ENCODE measurements at regions of chr1 and their contacts with region 1.

Region 1: DNA sequence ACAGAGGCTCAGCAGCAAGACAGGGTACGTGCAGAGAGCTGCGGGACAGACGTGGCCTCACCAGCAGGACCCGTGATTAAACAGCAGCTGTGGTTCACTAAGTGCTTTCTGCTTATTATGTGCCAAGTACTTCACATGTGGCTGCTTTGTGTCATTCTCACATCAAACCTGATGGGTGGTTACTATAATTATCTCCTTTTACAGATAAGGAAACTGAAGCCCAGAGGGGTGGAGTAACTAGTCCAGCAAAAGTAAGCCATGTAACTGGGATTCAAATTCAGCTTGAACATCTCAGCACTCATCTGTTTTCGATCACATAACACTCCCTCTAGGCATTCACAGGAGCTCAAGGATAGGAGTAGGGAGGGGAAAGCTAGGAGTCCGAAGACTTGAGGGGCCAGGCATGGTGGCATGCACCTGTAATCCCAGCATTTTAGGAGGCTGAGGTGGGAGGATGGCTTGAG is 50.8 kb upstream of the CLIC4 start:
- DNase-seq: peak in 4 of 5 donors; percentile 73 to 88 (median 80)
- ATAC-seq: peak; percentile 91 to 94 (median 92)
- H3K4me3 ChIP-seq: no peak overlapping the region
- H3K27ac ChIP-seq: peak overlapping the region; percentile 35 to 89 (median 73)
- H3K4me1 ChIP-seq: peaks cover 14 to 56% (median 36%) of the 10 kb centered on the region in 12 donors
- H3K27me3 ChIP-seq: no peaks in the 10 kb centered on the region
- CTCF ChIP-seq: no peak
- POLR2A ChIP-seq: no peak

Region 2: GRCh38 chr1:24619376-24619775 is 75.0 kb before region 1 on chr1:
- intact Hi-C with region 1: no loop called
- DNase-seq: no peak
- ATAC-seq: no peak
- H3K4me3 ChIP-seq: no peak overlapping the region
- H3K27ac ChIP-seq: no peak overlapping the region
- H3K4me1 ChIP-seq: no peaks in the 10 kb centered on the region
- H3K27me3 ChIP-seq: peaks cover 0 to 5% (median 0%) of the 10 kb centered on the region in 9 donors
- CTCF ChIP-seq: no peak
- POLR2A ChIP-seq: no peak

Region 3: DNA sequence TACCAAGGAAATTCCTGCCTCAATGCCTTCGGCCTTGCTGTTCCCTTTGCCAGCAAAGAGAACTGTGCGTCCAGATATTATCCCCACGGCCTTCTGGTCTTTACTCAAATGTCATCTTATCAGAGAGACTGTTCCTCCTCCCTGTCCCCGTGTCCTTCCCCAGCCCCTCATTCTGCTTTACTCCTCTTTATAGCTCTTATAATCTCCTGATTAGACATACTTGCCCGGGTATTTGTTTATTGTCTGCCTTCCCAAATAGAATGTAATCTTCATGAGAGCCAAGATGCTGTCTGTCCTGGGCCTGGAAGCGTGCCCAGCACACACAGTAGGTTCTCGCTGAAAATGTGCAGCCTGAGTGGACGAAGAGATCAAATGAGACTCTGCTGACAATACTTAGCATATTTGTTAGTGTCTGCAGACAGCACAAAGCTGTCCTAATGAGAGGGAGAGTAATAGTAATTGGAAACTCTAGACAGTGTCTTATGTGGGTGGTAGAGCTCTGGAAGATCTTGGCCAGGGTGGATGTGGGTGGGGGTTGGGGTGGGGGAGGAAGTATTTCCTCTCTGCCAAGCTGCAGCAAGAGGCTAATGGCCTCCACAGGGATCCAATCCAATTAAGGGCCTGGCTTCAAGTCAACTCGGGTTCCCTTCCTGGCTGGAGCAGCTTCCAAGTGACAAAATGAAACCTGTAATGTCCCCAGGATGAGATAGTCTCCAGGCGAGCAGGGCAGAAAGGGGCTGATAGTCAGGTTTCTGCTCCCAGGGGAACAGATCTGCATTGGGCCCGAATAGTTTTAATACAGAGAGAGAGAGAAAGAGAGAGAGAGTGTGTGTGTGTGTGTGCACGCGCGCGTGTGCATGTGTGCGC is 41.3 kb after region 1 on chr1:
- intact Hi-C with region 1: loop called in 3 of 10 experiments (anchors 5 kb)
- DNase-seq: peak in 4 of 5 donors; percentile 76 to 79 (median 78)
- ATAC-seq: peak; percentile 76 to 89 (median 87)
- H3K4me3 ChIP-seq: peak overlapping the region in 10 of 12 donors; percentile 7 to 35 (median 24)
- H3K27ac ChIP-seq: peak overlapping the region; percentile 48 to 93 (median 80)
- H3K4me1 ChIP-seq: peaks cover 0 to 50% (median 29%) of the 10 kb centered on the region in 12 donors
- H3K27me3 ChIP-seq: no peaks in the 10 kb centered on the region
- CTCF ChIP-seq: no peak
- POLR2A ChIP-seq: no peak